ENCODE measurements at regions of chr12 and their contacts with region 1.

Region 1: GRCh38 chr12:76790564-76791552 is 26.9 kb downstream of the ZDHHC17 start:
- DNase-seq: no peak
- ATAC-seq: no peak
- H3K4me3 Mint-ChIP-seq: no peak overlapping the region
- H3K27ac Mint-ChIP-seq: no peak overlapping the region
- H3K4me1 Mint-ChIP-seq: peaks cover 22% of the 10 kb centered on the region
- H3K27me3 Mint-ChIP-seq: no peaks in the 10 kb centered on the region

Region 2: DNA sequence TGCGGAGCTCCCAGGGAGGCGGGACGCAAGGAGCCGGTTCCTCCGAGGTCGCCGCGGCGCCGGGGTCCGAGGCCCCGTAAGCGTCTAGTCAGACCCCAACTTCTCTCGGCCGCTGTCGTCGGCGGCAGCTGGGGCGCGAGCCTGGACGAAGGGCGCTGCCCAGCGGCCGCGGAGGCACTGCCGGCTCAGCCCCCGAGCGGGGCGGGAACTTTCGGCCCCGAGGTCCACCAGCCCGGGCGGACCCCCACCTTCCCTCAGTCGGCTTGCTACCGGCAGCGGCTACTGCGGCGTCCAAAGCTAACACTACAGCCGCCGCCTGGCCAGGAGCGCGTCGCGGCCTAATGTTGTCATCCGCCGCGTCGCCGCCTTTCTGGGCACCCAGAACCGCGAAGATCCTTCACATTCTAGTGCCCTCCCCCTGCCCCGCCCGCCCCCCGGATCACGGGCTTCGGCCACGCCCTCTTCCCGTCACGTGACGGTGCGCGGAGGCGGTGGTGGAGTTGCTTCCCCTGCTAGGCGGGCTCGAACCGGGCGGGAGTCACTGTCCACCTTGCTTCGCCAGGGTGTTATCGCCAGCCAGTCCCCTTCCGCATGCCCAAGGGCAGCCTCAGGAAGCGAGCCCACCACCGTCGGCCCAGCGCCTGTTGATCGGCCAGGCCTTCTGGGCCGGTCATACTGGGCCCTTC is 231.3 kb before region 1 on chr12 and contains the start of gene OSBPL8:
- CTCF ChIA-PET with region 1: no interaction called
- POLR2A ChIA-PET with region 1: no interaction called
- intact Hi-C with region 1: no loop called
- DNase-seq: peak; percentile 98
- ATAC-seq: peak; percentile 70
- H3K4me3 Mint-ChIP-seq: peak within 1 kb of the TSS; percentile 86
- H3K27ac Mint-ChIP-seq: peak within 1 kb of the TSS; percentile 98
- H3K4me1 Mint-ChIP-seq: peaks cover 24% of the 10 kb centered on the region
- H3K27me3 Mint-ChIP-seq: no peaks in the 10 kb centered on the region
- total RNA-seq, gene OSBPL8: 70.2 to 78.5 TPM

Region 3: GRCh38 chr12:76621582-76622024 is 169.3 kb before region 1 on chr12:
- CTCF ChIA-PET with region 1: interaction called, 47 read pairs
- POLR2A ChIA-PET with region 1: no interaction called
- intact Hi-C with region 1: loop called (anchors 1 kb)
- DNase-seq: peak; percentile 81
- ATAC-seq: peak; percentile 84
- H3K4me3 Mint-ChIP-seq: no peak overlapping the region
- H3K27ac Mint-ChIP-seq: no peak overlapping the region
- H3K4me1 Mint-ChIP-seq: peaks cover 5% of the 10 kb centered on the region
- H3K27me3 Mint-ChIP-seq: no peaks in the 10 kb centered on the region

Region 4: DNA sequence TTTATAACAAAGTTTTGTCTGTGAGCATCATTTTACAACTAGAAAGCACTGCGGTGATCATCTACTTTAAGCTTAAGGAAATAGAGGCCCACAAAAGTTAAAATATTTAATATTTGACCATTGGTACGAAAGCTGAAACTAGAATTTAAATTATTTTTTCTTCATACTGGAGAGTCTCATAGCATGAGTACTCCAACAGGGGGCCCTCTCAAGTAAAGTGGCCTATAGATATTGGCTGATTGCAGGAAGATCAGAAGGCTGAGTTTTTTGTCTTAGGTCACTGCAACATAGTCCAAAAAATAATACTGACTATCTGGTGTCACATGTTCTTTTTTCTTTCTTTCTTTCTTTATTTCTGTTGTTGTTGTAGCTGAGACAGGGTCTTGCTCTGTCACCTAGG is 102.2 kb before region 1 on chr12:
- CTCF ChIA-PET with region 1: interaction called, 6 read pairs
- POLR2A ChIA-PET with region 1: no interaction called
- intact Hi-C with region 1: loop called (anchors 1 to 2 kb)
- DNase-seq: peak; percentile 9
- ATAC-seq: peak; percentile 36
- H3K4me3 Mint-ChIP-seq: no peak overlapping the region
- H3K27ac Mint-ChIP-seq: no peak overlapping the region
- H3K4me1 Mint-ChIP-seq: peaks cover 3% of the 10 kb centered on the region
- H3K27me3 Mint-ChIP-seq: no peaks in the 10 kb centered on the region

Region 5: DNA sequence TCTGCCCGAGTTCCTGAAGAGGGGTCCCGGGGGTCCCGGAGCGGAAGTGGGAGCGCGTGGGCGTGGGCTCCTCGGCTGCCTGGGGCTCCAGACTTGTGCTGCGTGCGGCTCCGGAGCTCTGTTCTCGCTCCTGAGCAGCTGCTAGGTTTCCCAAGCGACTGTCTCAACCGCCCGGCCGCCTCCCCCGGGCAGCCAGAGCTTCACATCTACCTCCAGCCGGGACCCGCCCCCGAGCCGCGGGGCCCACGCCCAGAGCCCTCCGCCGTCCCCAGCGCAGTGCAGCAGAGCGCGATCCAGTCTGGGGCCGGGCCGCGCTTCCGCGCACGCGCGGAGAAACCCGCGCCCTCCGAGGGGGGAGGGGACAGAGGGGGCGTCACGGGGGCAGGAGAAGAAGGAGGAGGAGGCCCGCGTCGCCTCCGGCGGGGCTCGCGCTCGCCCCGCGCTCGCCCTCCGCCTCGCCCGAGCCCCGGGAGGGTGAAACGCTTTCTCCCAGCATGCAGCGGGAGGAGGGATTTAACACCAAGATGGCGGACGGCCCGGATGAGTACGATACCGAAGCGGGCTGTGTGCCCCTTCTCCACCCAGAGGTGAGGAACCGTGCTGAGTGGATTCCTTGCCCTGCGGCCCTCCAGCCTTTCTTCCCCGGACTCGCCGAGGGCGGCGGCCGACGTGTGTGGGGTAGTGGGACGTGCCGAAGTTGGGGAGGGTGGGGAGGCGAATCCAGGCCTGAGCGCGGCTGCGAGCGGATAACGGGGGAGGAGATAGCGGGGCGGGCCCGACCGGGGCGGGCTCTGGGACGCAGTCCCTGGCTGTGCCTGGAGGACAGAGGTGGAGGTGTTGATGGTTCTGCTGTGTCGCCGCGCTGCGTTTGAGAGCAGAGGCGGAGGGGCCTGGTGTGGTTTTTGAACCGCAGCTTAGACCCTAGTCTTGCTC is 26.8 kb before region 1 on chr12 and contains the start of gene ZDHHC17:
- CTCF ChIA-PET with region 1: interaction called, 8 read pairs
- POLR2A ChIA-PET with region 1: no interaction called
- intact Hi-C with region 1: loop called in 1 of 2 experiments (anchors 2 kb)
- DNase-seq: peak; percentile 93
- ATAC-seq: peak; percentile 89
- H3K4me3 Mint-ChIP-seq: peak within 1 kb of the TSS; percentile 96
- H3K27ac Mint-ChIP-seq: peak within 1 kb of the TSS; percentile 97
- H3K4me1 Mint-ChIP-seq: peaks cover 41% of the 10 kb centered on the region
- H3K27me3 Mint-ChIP-seq: no peaks in the 10 kb centered on the region
- total RNA-seq, gene ZDHHC17: 17.6 to 22.7 TPM

Region 6: GRCh38 chr12:76777765-76778216 is 13.1 kb before region 1 on chr12:
- CTCF ChIA-PET with region 1: interaction called, 20 read pairs
- POLR2A ChIA-PET with region 1: no interaction called
- intact Hi-C with region 1: no loop called
- DNase-seq: no peak
- ATAC-seq: peak; percentile 71
- H3K4me3 Mint-ChIP-seq: peak overlapping the region; percentile 32
- H3K27ac Mint-ChIP-seq: peak overlapping the region; percentile 58
- H3K4me1 Mint-ChIP-seq: peaks cover 71% of the 10 kb centered on the region
- H3K27me3 Mint-ChIP-seq: no peaks in the 10 kb centered on the region

Region 7: DNA sequence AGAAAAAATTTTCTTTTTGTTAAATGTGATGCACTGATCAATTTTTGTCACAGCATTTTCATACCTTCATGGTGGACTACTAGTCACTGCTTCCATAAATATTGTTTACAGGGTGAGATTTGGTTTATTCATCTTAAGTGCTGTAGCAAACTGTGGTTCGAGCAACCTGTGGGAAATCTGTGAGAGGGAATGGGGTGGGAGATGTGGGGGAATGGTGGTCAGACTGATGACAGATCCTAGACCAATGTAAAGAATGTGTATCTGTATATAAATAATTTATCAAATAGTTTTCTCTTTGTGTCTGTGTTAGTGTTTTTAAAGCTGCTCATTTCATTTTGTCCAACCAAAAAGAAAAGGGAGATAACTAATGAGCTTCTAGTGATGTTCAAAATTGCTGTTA is 61.2 kb after region 1 on chr12:
- CTCF ChIA-PET with region 1: no interaction called
- POLR2A ChIA-PET with region 1: no interaction called
- intact Hi-C with region 1: no loop called
- DNase-seq: no peak
- ATAC-seq: no peak
- H3K4me3 Mint-ChIP-seq: no peak overlapping the region
- H3K27ac Mint-ChIP-seq: no peak overlapping the region
- H3K4me1 Mint-ChIP-seq: no peaks in the 10 kb centered on the region
- H3K27me3 Mint-ChIP-seq: no peaks in the 10 kb centered on the region

Region 8: DNA sequence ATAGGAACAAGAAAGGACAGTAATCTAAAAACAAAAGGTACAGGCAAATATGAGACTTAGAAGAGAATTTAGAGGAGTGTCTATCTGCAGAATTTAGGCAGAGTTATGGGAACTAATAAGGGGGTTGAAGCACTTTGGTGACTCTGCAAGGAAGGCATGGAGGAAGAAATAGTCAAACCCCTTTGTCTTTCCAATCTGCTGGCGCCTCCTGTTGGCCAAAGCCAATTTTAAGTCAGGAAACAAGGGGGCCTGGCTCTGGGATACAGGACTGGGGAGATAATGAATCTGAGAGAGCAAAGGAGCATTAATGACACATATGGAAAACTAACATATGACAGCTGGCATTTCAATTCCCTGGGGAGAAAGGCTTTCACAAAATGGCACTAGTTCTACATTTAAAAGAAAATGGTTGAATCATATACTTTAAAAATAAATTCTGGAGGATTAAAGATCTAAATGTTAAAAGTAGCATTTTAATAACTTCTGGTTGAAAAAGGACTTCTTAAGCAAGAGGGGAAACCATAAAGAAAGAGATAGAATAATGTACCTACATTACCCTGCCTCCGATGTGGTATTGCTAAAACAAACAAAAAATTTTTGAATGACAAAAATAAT is 136.4 kb after region 1 on chr12:
- CTCF ChIA-PET with region 1: no interaction called
- POLR2A ChIA-PET with region 1: no interaction called
- intact Hi-C with region 1: loop called in 1 of 2 experiments (anchors 5 kb)
- DNase-seq: peak; percentile 74
- ATAC-seq: peak; percentile 30
- H3K4me3 Mint-ChIP-seq: no peak overlapping the region
- H3K27ac Mint-ChIP-seq: no peak overlapping the region
- H3K4me1 Mint-ChIP-seq: no peaks in the 10 kb centered on the region
- H3K27me3 Mint-ChIP-seq: peaks cover 2% of the 10 kb centered on the region

Region 9: GRCh38 chr12:77010691-77011548 is 220.1 kb after region 1 on chr12:
- CTCF ChIA-PET with region 1: interaction called, 6 read pairs
- POLR2A ChIA-PET with region 1: no interaction called
- intact Hi-C with region 1: loop called in 1 of 2 experiments (anchors 2 kb)
- DNase-seq: peak; percentile 85
- ATAC-seq: peak; percentile 80
- H3K4me3 Mint-ChIP-seq: no peak overlapping the region
- H3K27ac Mint-ChIP-seq: no peak overlapping the region
- H3K4me1 Mint-ChIP-seq: peaks cover 4% of the 10 kb centered on the region
- H3K27me3 Mint-ChIP-seq: peaks cover 8% of the 10 kb centered on the region

Region 10: DNA sequence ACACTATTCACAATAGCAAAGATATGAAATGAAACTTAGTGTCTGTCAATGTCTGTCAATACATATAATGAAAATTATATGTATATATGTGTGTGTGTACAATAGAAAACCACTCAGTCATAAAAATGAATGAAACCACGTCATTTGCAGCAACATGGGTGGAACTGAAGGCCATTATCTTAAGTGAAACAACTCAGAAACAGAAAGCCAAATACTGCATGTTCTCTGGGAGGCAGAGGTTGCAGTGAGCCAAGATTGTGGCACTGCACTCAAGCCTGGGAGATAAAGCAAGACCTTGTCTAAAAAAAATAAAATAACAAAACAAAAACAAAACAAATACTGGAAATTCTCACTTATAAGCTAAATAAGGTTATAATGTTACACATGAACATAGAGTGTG is 291.2 kb after region 1 on chr12:
- CTCF ChIA-PET with region 1: no interaction called
- POLR2A ChIA-PET with region 1: no interaction called
- intact Hi-C with region 1: no loop called
- DNase-seq: no peak
- ATAC-seq: no peak
- H3K4me3 Mint-ChIP-seq: no peak overlapping the region
- H3K27ac Mint-ChIP-seq: no peak overlapping the region
- H3K4me1 Mint-ChIP-seq: no peaks in the 10 kb centered on the region
- H3K27me3 Mint-ChIP-seq: peaks cover 7% of the 10 kb centered on the region

Region 11: DNA sequence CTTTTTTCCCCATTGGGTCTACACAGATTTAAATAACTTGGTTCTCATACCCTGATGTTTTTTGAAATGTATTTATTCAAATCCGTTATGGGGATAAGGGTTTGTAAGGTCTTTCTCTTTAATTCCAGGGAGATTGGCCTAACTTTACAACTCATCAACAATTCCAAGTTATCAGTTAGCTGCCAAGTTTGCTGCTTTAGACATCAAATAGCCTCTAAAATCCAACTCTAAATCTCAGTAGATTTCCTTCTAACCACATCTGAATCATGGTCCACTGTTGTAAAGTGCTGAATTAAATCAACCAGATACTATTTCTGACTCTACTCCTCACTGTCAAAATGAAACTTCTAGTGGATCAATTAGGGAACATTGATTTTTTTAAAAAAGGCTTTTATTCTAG is 638.6 kb after region 1 on chr12:
- CTCF ChIA-PET with region 1: no interaction called
- POLR2A ChIA-PET with region 1: no interaction called
- intact Hi-C with region 1: no loop called
- DNase-seq: no peak
- ATAC-seq: no peak
- H3K4me3 Mint-ChIP-seq: no peak overlapping the region
- H3K27ac Mint-ChIP-seq: no peak overlapping the region
- H3K4me1 Mint-ChIP-seq: no peaks in the 10 kb centered on the region
- H3K27me3 Mint-ChIP-seq: no peaks in the 10 kb centered on the region

Measured in activated CD4-positive, alpha-beta T cell treated with anti-CD3 and anti-CD28 coated beads for 36 hours (primary cell).